ENCODE measurements at regions of chr7 and their contacts with region 1.

Region 1: DNA sequence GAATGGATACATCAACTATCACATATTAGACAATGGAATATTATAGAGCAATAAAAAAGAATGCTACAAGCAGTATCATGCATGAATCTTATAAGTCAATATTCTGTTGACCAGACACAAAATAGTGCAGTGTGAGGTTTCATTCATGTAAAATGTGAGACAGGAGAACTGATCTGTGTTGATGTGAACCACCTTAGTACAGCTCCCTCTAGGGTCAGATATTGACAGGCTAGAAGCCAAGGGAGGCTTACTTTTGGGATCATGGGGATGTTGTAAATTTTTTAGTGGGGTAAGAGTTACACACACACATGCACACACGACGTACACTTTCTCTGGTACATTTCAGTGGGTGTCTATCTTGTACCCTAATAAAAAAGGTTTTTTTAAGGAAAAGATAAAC is 231.6 kb upstream of the FOXK1 start:
- DNase-seq: no peak
- H3K4me3 ChIP-seq: no peak overlapping the region
- H3K27ac ChIP-seq: no peak overlapping the region
- H3K4me1 ChIP-seq: no peaks in the 10 kb centered on the region
- H3K27me3 ChIP-seq: no peaks in the 10 kb centered on the region; a peak in 1 of 7 replicates
- CTCF ChIP-seq: peak in 1 of 3 experiments; percentile 8; a peak in 1 of 4 replicates
- EP300 ChIP-seq: no peak
- POLR2A ChIP-seq: no peak
- RAD21 ChIP-seq: no peak; a peak in 1 of 4 replicates

Region 2: DNA sequence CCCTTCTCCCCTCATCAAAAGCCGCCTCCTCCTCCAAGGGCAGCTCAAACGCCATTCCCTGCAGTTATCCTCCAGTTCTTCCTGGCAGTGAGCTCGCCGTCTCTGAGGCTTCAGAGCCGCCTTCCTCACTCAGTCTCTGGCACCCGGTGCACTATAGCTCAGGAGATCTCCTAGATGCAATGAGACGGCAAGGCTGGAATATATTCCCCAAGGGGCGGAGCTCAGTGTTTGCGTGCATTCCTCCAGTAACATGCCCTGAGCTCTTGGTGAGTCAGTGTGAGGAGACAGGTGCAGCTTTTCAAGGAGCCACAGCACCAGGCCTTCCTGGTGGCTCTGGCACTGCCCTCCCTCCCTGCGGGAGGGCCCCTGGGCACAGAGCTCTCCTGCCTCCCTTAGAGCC is 281.0 kb before region 1 on chr7:
- CTCF ChIA-PET with region 1: no interaction called
- POLR2A ChIA-PET with region 1: no interaction called
- DNase-seq: no peak
- H3K4me3 ChIP-seq: no peak overlapping the region
- H3K27ac ChIP-seq: no peak overlapping the region; the same call in 1 of the 2 replicates
- H3K4me1 ChIP-seq: peaks cover 0 to 6% (median 3%) of the 10 kb centered on the region in 4 experiments; a peak in 2 of 7 replicates
- H3K27me3 ChIP-seq: no peaks in the 10 kb centered on the region
- CTCF ChIP-seq: no peak
- EP300 ChIP-seq: no peak
- POLR2A ChIP-seq: no peak
- RAD21 ChIP-seq: no peak

Region 3: GRCh38 chr7:4216016-4216415 is 234.5 kb before region 1 on chr7:
- CTCF ChIA-PET with region 1: no interaction called
- POLR2A ChIA-PET with region 1: no interaction called
- DNase-seq: no peak
- H3K4me3 ChIP-seq: no peak overlapping the region
- H3K27ac ChIP-seq: no peak overlapping the region
- H3K4me1 ChIP-seq: no peaks in the 10 kb centered on the region; a peak in 1 of 7 replicates
- H3K27me3 ChIP-seq: no peaks in the 10 kb centered on the region
- CTCF ChIP-seq: no peak
- EP300 ChIP-seq: no peak
- POLR2A ChIP-seq: no peak
- RAD21 ChIP-seq: no peak

Region 4: DNA sequence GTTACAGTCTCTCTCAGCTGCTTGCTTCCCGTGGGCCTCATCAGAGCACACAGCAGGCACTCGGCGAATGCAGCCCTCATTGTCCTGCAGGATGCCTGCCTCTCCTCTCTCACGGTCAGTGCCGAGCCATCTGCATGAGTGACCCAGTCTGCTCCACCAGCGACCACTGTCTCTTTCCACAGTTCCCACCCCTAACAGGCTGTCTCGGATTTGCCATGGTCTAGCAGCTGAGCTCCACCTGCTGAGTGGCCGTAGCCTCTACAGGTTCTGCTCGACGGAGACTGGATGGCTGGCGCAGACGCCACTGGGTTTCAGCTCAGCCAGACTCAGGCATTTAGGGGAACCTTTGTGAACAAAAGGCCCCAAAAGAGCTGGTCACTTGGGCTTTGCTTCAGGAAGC is 22.3 kb after region 1 on chr7:
- CTCF ChIA-PET with region 1: interaction called, 10 read pairs
- POLR2A ChIA-PET with region 1: no interaction called
- DNase-seq: peak in 1 of 2 experiments; percentile 44
- H3K4me3 ChIP-seq: no peak overlapping the region
- H3K27ac ChIP-seq: no peak overlapping the region
- H3K4me1 ChIP-seq: peaks cover 0 to 6% (median 0%) of the 10 kb centered on the region in 4 experiments; a peak in 2 of 7 replicates
- H3K27me3 ChIP-seq: no peaks in the 10 kb centered on the region
- CTCF ChIP-seq: peak in 2 of 3 experiments; percentile 23 to 24; a peak in 2 of 4 replicates
- EP300 ChIP-seq: no peak
- POLR2A ChIP-seq: no peak
- RAD21 ChIP-seq: peak; percentile 34 to 55